Activated B cell treated with CpG ODN at 0.5 μM for 24 hours (primary cell): ENCODE measurements at regions of chr6 and their contacts with region 1.

Region 1: DNA sequence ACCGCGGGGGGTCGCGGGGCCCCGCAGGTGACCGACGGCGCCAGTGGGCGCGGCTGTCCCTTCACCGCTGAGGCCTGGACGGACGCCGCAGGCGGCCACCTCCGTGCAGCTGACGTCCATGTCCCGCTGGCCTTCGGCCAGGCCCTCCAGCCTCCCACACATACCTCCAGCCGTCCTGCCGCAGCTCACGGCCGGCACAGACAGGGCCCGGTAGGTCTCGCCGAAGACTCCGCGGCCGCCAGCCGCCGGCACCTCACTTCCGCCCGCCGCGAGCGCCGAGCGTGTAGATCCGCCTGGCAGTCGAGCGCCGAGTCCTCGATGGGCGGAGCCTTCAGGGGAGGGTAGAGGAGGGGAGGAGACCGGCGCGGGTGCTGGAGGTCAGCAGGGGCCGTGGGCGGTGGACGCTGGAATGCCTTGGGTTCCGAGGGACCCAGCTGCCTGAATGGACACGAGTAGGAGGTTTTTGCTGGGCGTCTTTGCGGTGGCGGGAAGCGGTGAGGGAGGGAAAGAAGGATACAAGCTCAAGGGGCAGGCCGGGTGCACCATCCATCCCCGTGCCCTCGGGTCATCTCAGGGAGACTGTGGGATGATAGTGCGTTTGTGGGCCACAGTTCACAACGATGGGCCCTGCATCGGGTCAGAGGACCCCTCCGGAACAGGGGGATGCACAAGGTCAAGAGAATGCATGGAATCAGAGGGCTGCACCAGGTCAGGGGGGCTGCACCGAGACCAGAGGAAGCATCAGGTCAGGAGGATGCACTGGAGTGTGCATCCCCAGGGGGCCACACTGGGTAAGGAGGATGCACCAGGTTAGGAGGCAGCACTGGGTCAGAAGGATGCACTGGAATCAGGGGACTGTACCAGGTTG is at the start of gene EXOC2:
- DNase-seq: peak; percentile 82
- ATAC-seq: peak; percentile 85
- H3K4me3 Mint-ChIP-seq: peak within 1 kb of the TSS; percentile 96
- H3K27ac Mint-ChIP-seq: peak within 1 kb of the TSS; percentile 85
- H3K4me1 Mint-ChIP-seq: peaks cover 30% of the 10 kb centered on the region
- H3K27me3 Mint-ChIP-seq: no peaks in the 10 kb centered on the region
- CTCF ChIP-seq: no peak
- total RNA-seq, gene EXOC2: 29.8 and 30.8 TPM in 2 replicates

Region 2: DNA sequence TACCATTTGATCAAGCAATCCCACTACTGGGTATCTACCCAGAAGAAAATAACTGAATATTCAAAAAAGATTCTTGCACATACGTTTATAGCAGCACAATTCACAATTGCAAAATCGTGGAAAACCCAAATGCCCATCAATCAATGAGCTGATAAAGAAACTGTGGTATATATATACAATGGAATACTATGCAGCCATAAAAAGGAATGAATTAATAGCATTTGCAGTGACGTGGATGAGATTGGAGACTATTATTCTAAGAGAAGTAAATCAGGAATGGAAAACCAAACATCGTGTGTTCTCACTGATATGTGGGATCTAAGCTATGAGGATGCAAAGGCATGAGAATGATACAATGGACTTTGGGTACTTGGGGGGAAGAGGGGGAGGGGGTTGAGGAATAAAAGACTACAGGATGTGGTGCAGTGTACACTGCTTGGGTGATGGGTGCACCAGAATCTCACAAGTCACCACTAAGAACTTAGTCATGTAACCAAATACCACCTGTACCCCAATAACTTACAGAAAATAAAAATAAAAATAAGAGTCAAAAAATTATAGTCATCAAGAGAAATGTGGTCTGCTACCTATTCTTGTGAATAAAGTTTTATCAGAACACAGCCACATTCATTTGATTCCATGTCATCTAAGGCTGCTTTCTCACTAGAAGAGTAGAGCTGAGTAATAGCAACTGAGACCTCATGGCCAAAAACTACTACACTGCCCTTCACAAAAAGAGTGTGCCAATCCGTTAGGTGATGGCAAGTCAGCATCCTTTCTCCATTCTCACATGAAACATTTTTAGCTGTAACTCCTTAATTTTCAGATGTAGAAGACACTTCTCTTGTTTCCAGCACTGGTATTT is 27.5 kb before region 1 on chr6:
- CTCF ChIA-PET with region 1: no interaction called
- POLR2A ChIA-PET with region 1: no interaction called
- intact Hi-C with region 1: loop called (anchors 2 kb)
- DNase-seq: no peak
- ATAC-seq: no peak
- H3K4me3 Mint-ChIP-seq: no peak overlapping the region
- H3K27ac Mint-ChIP-seq: no peak overlapping the region
- H3K4me1 Mint-ChIP-seq: peaks cover 75% of the 10 kb centered on the region
- H3K27me3 Mint-ChIP-seq: no peaks in the 10 kb centered on the region
- CTCF ChIP-seq: no peak